CD4-positive, alpha-beta memory T cell (primary cell): ENCODE measurements at regions of chr7 and their contacts with region 1.

Region 1: DNA sequence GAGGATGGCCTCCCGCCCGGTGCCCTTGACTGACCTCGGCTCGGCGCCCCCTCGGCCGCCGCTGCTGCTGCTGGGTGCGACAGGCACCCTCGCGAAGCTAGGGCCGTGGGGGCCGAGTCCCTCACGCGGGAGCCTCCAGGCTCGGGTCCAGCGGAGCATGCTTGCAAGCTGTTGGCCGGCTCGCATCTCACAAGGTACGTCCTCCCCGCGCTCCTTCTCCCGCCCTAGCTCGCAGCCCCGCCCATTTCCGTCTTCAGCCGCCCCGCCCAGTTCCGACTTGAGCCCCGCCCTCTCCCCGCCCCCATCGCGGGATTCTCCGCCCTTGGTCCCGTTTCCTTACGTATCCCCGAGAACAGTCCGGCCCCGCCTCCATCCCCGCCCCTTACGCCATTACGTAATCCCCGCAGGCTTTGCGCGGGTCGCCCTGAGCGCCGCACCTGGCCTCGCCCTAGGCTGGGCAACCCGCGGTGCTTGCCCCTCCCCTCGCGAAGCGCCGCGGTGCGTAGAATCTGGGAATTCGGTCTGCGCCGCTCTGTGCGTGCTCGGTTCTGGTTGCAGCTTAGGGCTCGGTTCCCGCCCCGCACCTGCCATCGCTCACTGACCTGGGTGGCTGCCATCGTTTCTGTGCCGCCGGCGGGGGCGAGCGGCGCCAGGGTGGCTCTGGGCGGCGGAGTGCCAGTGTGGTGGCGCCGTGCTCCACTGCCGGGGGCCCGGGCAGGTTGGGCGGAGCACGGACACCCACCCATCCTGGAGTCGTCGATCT is at the start of gene ABHD11:
- DNase-seq: peak; percentile 96 to 99 (median 97)
- H3K4me3 ChIP-seq: peak within 1 kb of the TSS; percentile 65 to 78
- H3K4me3 Mint-ChIP-seq: peak within 1 kb of the TSS; percentile 88 to 95 (median 91)
- H3K27ac ChIP-seq: peak within 1 kb of the TSS; percentile 75
- H3K27ac Mint-ChIP-seq: peak within 1 kb of the TSS; percentile 89 to 96 (median 94)
- H3K4me1 ChIP-seq: peaks cover 21% of the 10 kb centered on the region
- H3K4me1 Mint-ChIP-seq: peaks cover 6 to 26% (median 13%) of the 10 kb centered on the region in 4 donors
- H3K27me3 ChIP-seq: no peaks in the 10 kb centered on the region
- H3K27me3 Mint-ChIP-seq: no peaks in the 10 kb centered on the region
- total RNA-seq, gene ABHD11: 22.3 to 23.9 TPM

Region 2: GRCh38 chr7:73557108-73557396 is 181.7 kb before region 1 on chr7:
- CTCF ChIA-PET with region 1: no interaction called
- POLR2A ChIA-PET with region 1: interaction called, 3 read pairs
- intact Hi-C with region 1: loop called (anchors 1 kb)
- DNase-seq: peak; percentile 90 to 93 (median 92)
- H3K4me3 ChIP-seq: peak overlapping the region; percentile 67 to 99
- H3K4me3 Mint-ChIP-seq: peak overlapping the region; percentile 89 to 95 (median 92)
- H3K27ac ChIP-seq: peak overlapping the region; percentile 97
- H3K27ac Mint-ChIP-seq: peak overlapping the region; percentile 91 to 96 (median 95)
- H3K4me1 ChIP-seq: peaks cover 44% of the 10 kb centered on the region
- H3K4me1 Mint-ChIP-seq: peaks cover 21 to 41% (median 29%) of the 10 kb centered on the region in 4 donors
- H3K27me3 ChIP-seq: no peaks in the 10 kb centered on the region
- H3K27me3 Mint-ChIP-seq: no peaks in the 10 kb centered on the region

Region 3: GRCh38 chr7:73606801-73607691 is 131.7 kb before region 1 on chr7:
- CTCF ChIA-PET with region 1: interaction called, 142 read pairs
- POLR2A ChIA-PET with region 1: interaction called, 9 read pairs
- intact Hi-C with region 1: loop called (anchors 2 kb)
- DNase-seq: peak; percentile 56 to 62 (median 59)
- H3K4me3 ChIP-seq: no peak overlapping the region
- H3K4me3 Mint-ChIP-seq: no peak overlapping the region
- H3K27ac ChIP-seq: no peak overlapping the region
- H3K27ac Mint-ChIP-seq: peak overlapping the region in 1 of 7 donors; percentile 19
- H3K4me1 ChIP-seq: peaks cover 6% of the 10 kb centered on the region
- H3K4me1 Mint-ChIP-seq: no peaks in the 10 kb centered on the region
- H3K27me3 ChIP-seq: no peaks in the 10 kb centered on the region
- H3K27me3 Mint-ChIP-seq: peaks cover 0 to 14% of the 10 kb centered on the region in 2 donors

Region 4: GRCh38 chr7:73683056-73683964 is 55.5 kb before region 1 on chr7 and contains the starts of genes BUD23 and DNAJC30:
- CTCF ChIA-PET with region 1: no interaction called
- POLR2A ChIA-PET with region 1: no interaction called
- intact Hi-C with region 1: loop called (anchors 1 kb)
- DNase-seq: peak; percentile 86 to 98 (median 92)
- H3K4me3 ChIP-seq: peak within 1 kb of the TSS; percentile 89 to 98
- H3K4me3 Mint-ChIP-seq: peak within 1 kb of the TSS; percentile 94 to 99 (median 96)
- H3K27ac ChIP-seq: peak within 1 kb of the TSS; percentile 78
- H3K27ac Mint-ChIP-seq: peak within 1 kb of the TSS; percentile 94 to 97 (median 95)
- H3K4me1 ChIP-seq: peaks cover 28% of the 10 kb centered on the region
- H3K4me1 Mint-ChIP-seq: peaks cover 15 to 47% (median 30%) of the 10 kb centered on the region in 4 donors
- H3K27me3 ChIP-seq: no peaks in the 10 kb centered on the region
- H3K27me3 Mint-ChIP-seq: no peaks in the 10 kb centered on the region
- total RNA-seq, gene BUD23: 54.3 to 60.6 TPM
- total RNA-seq, gene DNAJC30: 16.3 to 16.5 TPM

Region 5: DNA sequence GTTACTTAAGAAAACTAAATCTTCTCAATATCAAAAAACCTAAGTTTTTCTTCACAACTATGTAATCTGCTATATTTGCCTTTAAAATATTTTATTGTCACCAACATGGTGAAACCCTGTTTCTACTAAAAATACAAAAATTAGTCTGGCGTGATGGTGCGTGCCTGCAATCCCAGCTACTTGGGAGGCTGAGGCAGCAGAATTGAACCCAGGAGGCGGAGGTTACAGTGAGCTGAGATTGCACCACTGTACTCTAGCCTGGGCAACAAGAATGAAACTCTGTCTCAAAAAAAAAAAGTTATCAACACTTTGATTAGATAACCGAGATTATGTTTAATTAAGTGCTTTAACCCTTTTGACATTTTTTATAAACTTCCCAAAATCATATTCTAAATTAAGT is 63.7 kb after region 1 on chr7:
- CTCF ChIA-PET with region 1: no interaction called
- POLR2A ChIA-PET with region 1: no interaction called
- intact Hi-C with region 1: no loop called
- DNase-seq: no peak
- H3K4me3 ChIP-seq: no peak overlapping the region
- H3K4me3 Mint-ChIP-seq: no peak overlapping the region
- H3K27ac ChIP-seq: no peak overlapping the region
- H3K27ac Mint-ChIP-seq: no peak overlapping the region
- H3K4me1 ChIP-seq: no peaks in the 10 kb centered on the region
- H3K4me1 Mint-ChIP-seq: no peaks in the 10 kb centered on the region
- H3K27me3 ChIP-seq: no peaks in the 10 kb centered on the region
- H3K27me3 Mint-ChIP-seq: peaks cover 7 to 9% of the 10 kb centered on the region in 2 donors

Region 6: GRCh38 chr7:73842247-73842895 is 103.6 kb after region 1 on chr7 and contains the start of gene METTL27:
- CTCF ChIA-PET with region 1: no interaction called
- POLR2A ChIA-PET with region 1: interaction called, 4 read pairs
- intact Hi-C with region 1: loop called (anchors 1 kb)
- DNase-seq: peak; percentile 84 to 91 (median 88)
- H3K4me3 ChIP-seq: peak within 1 kb of the TSS; percentile 47 to 72
- H3K4me3 Mint-ChIP-seq: peak within 1 kb of the TSS; percentile 86 to 91 (median 88)
- H3K27ac ChIP-seq: peak within 1 kb of the TSS; percentile 22
- H3K27ac Mint-ChIP-seq: peak within 1 kb of the TSS in 5 of 7 donors; percentile 57 to 86 (median 64)
- H3K4me1 ChIP-seq: peaks cover 6% of the 10 kb centered on the region
- H3K4me1 Mint-ChIP-seq: peaks cover 0 to 16% (median 8%) of the 10 kb centered on the region in 4 donors
- H3K27me3 ChIP-seq: no peaks in the 10 kb centered on the region
- H3K27me3 Mint-ChIP-seq: peaks cover 0 to 2% of the 10 kb centered on the region in 2 donors
- total RNA-seq, gene METTL27: 6.1 to 7.6 TPM

Region 7: GRCh38 chr7:73858807-73859206 is 120.0 kb after region 1 on chr7:
- CTCF ChIA-PET with region 1: interaction called, 16 read pairs
- POLR2A ChIA-PET with region 1: no interaction called
- intact Hi-C with region 1: loop called (anchors 1 kb)
- DNase-seq: no peak
- H3K4me3 ChIP-seq: no peak overlapping the region
- H3K4me3 Mint-ChIP-seq: no peak overlapping the region
- H3K27ac ChIP-seq: no peak overlapping the region
- H3K27ac Mint-ChIP-seq: no peak overlapping the region
- H3K4me1 ChIP-seq: peaks cover 8% of the 10 kb centered on the region
- H3K4me1 Mint-ChIP-seq: peaks cover 0 to 5% (median 1%) of the 10 kb centered on the region in 4 donors
- H3K27me3 ChIP-seq: no peaks in the 10 kb centered on the region
- H3K27me3 Mint-ChIP-seq: peaks cover 9 to 11% of the 10 kb centered on the region in 2 donors